Endothelial cell of umbilical vein (primary cell): ENCODE measurements at regions of chr2 and their contacts with region 1.

Region 1: GRCh38 chr2:231482806-231483391 is 18.6 kb upstream of the NCL start:
- DNase-seq: peak; percentile 75
- H3K4me3 ChIP-seq: peak overlapping the region; percentile 9 to 46 (median 39)
- H3K27ac ChIP-seq: peak overlapping the region; percentile 50
- H3K4me1 ChIP-seq: peaks cover 9% of the 10 kb centered on the region
- H3K27me3 ChIP-seq: no peaks in the 10 kb centered on the region
- CTCF ChIP-seq: peak; percentile 95 to 98
- POLR2A ChIP-seq: no peak

Region 2: DNA sequence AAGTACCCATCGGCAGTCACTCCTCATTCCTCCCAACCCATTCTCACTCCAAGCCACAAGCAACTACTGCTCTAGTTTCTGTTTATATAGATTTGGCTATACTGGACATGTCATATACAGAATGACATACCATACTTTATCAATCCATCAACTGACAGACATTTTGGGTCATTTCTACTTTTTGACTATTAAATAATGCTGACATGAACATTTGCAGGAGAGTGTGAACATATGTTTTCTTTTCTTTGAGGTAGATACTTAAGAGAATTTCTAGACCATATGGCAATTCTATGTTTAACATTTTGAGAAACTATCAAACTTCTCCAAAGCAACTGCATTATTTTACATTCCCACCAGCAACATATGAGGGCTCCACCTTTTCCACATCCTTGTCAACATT is 14.8 kb after region 1 on chr2:
- CTCF ChIA-PET with region 1: interaction called, 11 read pairs
- POLR2A ChIA-PET with region 1: no interaction called
- dilution Hi-C with region 1: no loop called
- intact Hi-C with region 1: no loop called
- DNase-seq: no peak
- H3K4me3 ChIP-seq: no peak overlapping the region
- H3K27ac ChIP-seq: no peak overlapping the region
- H3K4me1 ChIP-seq: no peaks in the 10 kb centered on the region
- H3K27me3 ChIP-seq: peaks cover 0 to 3% of the 10 kb centered on the region in 2 experiments
- CTCF ChIP-seq: no peak
- POLR2A ChIP-seq: no peak

Region 3: GRCh38 chr2:231530091-231531011 is 47.5 kb after region 1 on chr2 and contains the start of gene NMUR1:
- CTCF ChIA-PET with region 1: interaction called, 17 read pairs
- POLR2A ChIA-PET with region 1: no interaction called
- dilution Hi-C with region 1: no loop called
- intact Hi-C with region 1: no loop called
- DNase-seq: peak; percentile 39
- H3K4me3 ChIP-seq: no peak within 1 kb of the TSS
- H3K27ac ChIP-seq: no peak within 1 kb of the TSS
- H3K4me1 ChIP-seq: peaks cover 3% of the 10 kb centered on the region
- H3K27me3 ChIP-seq: peaks cover 9 to 13% of the 10 kb centered on the region in 2 experiments
- CTCF ChIP-seq: peak; percentile 72 to 91
- POLR2A ChIP-seq: no peak
- total RNA-seq, gene NMUR1: not detected in 2 replicates

Region 4: GRCh38 chr2:231557571-231558237 is 74.8 kb after region 1 on chr2:
- CTCF ChIA-PET with region 1: interaction called, 38 read pairs
- POLR2A ChIA-PET with region 1: no interaction called
- dilution Hi-C with region 1: no loop called
- intact Hi-C with region 1: loop called (anchors 1 kb)
- DNase-seq: peak; percentile 74
- H3K4me3 ChIP-seq: no peak overlapping the region
- H3K27ac ChIP-seq: no peak overlapping the region
- H3K4me1 ChIP-seq: peaks cover 5% of the 10 kb centered on the region
- H3K27me3 ChIP-seq: no peaks in the 10 kb centered on the region
- CTCF ChIP-seq: peak; percentile 64 to 72
- POLR2A ChIP-seq: no peak

Region 5: DNA sequence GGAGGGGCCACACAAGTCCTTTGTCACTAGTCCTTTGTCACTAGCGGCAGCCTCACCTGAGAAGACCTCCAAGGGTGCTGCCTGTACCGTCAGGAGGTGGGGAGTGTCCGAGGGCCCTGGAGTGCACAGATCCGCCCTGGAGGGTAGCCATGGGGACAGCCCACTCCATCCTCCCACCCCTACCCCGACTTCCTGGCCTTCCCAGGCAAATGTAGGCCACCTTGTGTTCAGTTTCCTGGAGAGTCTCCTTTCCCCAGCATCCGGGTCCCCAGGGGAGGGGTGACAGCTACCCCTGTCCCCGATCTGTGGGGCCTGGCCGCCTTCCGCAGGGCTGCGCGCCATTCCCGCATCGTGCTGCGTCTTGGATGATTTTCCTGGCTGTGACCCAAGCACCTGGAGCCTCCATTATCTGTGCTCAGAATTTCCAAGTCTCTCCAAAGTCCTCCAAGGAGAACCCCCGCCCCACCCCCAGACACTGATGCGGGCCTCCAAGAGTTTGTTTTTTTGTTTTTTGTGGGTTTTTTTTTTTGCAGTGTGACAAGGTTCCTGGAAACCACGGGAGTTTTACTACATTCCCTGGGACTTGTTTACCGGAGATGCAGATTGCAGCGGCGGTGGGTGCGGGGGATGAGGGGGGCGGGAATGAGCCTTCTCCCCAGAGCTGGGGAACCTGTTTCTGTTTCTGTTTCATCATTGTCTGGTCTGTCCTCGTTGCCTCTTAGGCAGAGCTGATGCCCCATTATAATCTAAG is 138.4 kb after region 1 on chr2:
- CTCF ChIA-PET with region 1: no interaction called
- POLR2A ChIA-PET with region 1: no interaction called
- dilution Hi-C with region 1: no loop called
- intact Hi-C with region 1: no loop called
- DNase-seq: no peak
- H3K4me3 ChIP-seq: no peak overlapping the region
- H3K27ac ChIP-seq: no peak overlapping the region
- H3K4me1 ChIP-seq: no peaks in the 10 kb centered on the region
- H3K27me3 ChIP-seq: no peaks in the 10 kb centered on the region
- CTCF ChIP-seq: no peak
- POLR2A ChIP-seq: no peak